ENCODE measurements at regions of chr7 and their contacts with region 1.

Region 1: GRCh38 chr7:99438573-99439480 is at the starts of genes CPSF4 and PTCD1:
- DNase-seq: peak; percentile 94
- ATAC-seq: peak; percentile 96
- H3K4me3 ChIP-seq: peak within 1 kb of the TSS; percentile 99
- H3K27ac ChIP-seq: peak within 1 kb of the TSS; percentile 49
- H3K4me1 ChIP-seq: peaks cover 13% of the 10 kb centered on the region
- H3K27me3 ChIP-seq: no peaks in the 10 kb centered on the region
- CTCF ChIP-seq: no peak
- total RNA-seq, gene CPSF4: 49.5 and 65.3 TPM in 2 replicates
- total RNA-seq, gene PTCD1: 10.4 and 11.5 TPM in 2 replicates

Region 2: DNA sequence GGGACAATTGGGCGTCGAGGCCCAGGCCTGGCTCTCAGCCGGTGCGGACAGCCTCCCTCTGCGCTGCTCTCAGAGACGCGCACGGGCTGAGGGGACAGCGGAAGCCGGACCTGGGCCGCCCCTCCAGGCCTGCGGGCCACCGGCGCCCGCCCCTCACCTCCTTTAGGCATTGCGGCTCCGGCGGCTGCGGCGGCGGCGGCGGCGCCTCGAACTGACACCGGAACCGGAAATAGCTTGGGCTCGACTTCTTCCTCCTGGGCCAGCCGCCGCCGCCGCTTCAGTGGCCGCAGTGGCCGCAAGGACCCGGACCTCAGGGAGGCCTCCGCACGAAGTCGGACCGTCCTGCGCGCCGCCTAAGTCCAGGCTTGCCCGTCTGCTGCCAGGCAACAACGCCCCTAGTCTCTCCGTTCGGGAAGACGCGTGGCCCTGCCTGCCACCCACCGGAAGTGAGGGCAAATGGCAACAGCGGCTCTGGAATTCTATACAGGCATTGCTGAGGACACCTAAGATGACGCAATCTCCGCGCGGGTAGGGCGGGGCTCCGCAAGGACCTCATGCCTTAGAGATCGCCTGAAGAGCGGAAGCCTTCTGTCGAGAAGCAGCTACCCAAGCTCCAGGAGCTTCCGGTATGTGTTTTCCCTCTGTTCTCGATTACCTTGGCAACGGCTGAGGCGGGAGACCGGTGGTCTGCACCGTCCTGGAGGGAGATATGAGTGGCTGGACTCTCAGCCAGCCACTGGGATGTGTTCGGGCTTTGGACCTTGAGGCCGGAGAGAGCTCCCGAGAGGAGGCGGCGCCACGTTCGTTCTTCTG is 30.2 kb before region 1 on chr7 and contains the starts of genes BUD31 and PDAP1:
- CTCF ChIA-PET with region 1: no interaction called
- POLR2A ChIA-PET with region 1: interaction called, 3 read pairs
- intact Hi-C with region 1: loop called (anchors 2 kb)
- DNase-seq: peak; percentile 87
- ATAC-seq: peak; percentile 82
- H3K4me3 ChIP-seq: peak within 1 kb of the TSS; percentile 90
- H3K27ac ChIP-seq: peak within 1 kb of the TSS; percentile 96
- H3K4me1 ChIP-seq: peaks cover 22% of the 10 kb centered on the region
- H3K27me3 ChIP-seq: no peaks in the 10 kb centered on the region
- CTCF ChIP-seq: no peak
- total RNA-seq, gene BUD31: 120 and 144 TPM in 2 replicates
- total RNA-seq, gene PDAP1: 58.6 and 84.7 TPM in 2 replicates

Region 3: GRCh38 chr7:99514050-99514449 is 75.2 kb after region 1 on chr7:
- CTCF ChIA-PET with region 1: no interaction called
- POLR2A ChIA-PET with region 1: no interaction called
- intact Hi-C with region 1: no loop called
- DNase-seq: no peak
- ATAC-seq: no peak
- H3K4me3 ChIP-seq: no peak overlapping the region
- H3K27ac ChIP-seq: no peak overlapping the region
- H3K4me1 ChIP-seq: no peaks in the 10 kb centered on the region; the same call in 1 of the 2 replicates
- H3K27me3 ChIP-seq: no peaks in the 10 kb centered on the region
- CTCF ChIP-seq: no peak

Measured in PC-3 (cell line).